ENCODE measurements at regions of chr17 and their contacts with region 1.

Region 1: GRCh38 chr17:38853292-38854219 is at the start of gene RPL23:
- DNase-seq: peak; percentile 94
- H3K4me3 Mint-ChIP-seq: peak within 1 kb of the TSS; percentile 95
- H3K27ac Mint-ChIP-seq: peak within 1 kb of the TSS; percentile 98
- H3K4me1 Mint-ChIP-seq: peaks cover 49% of the 10 kb centered on the region
- H3K27me3 Mint-ChIP-seq: no peaks in the 10 kb centered on the region
- total RNA-seq, gene RPL23: 933 to 960 TPM

Region 2: DNA sequence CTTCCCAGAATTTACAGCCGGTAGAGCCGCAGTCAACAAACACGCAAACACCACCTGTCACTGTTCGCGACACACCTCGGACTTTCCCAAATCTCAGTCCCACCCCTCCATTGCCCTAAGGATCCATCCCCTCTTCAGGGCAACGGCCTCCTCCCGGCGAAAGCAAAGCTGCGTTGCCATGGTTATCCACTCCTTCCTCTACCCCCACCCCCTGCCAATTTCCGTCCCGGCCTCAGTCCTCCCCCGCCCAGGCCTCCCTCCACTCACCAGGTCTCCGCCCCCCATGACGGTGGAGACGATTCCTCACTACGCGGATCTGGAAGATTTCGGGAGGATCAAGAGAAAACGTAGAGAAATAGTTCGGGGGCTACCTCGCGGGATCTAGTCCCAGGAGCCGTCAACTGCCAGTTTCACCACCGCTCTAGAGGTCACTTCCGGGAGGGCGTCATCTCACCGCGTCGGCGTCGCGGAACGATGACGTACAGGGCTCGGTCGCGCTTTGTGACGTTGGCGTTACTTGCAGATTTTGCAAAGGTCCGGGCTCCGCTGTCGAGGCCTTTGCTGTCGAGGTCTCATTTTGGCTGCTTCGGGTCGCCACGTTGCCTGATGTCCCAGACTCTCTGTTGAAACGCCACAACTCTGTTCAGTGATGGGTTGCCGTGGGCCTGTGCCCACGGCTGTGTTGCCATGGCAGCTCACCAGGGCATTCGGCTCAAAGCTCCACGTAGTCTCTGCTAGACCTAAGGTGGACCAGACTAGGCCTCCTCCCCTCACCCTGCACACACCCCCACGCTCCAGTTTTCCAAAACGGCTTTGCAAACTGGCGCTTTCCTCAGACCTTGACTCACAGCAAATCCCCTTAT is 28.4 kb before region 1 on chr17 and contains the start of gene CWC25:
- CTCF ChIA-PET with region 1: interaction called, 7 read pairs
- POLR2A ChIA-PET with region 1: interaction called, 85 read pairs
- DNase-seq: peak; percentile 97
- H3K4me3 Mint-ChIP-seq: peak within 1 kb of the TSS; percentile 99
- H3K27ac Mint-ChIP-seq: peak within 1 kb of the TSS; percentile 98
- H3K4me1 Mint-ChIP-seq: peaks cover 33% of the 10 kb centered on the region
- H3K27me3 Mint-ChIP-seq: no peaks in the 10 kb centered on the region
- total RNA-seq, gene CWC25: 29.0 to 30.1 TPM

Region 3: DNA sequence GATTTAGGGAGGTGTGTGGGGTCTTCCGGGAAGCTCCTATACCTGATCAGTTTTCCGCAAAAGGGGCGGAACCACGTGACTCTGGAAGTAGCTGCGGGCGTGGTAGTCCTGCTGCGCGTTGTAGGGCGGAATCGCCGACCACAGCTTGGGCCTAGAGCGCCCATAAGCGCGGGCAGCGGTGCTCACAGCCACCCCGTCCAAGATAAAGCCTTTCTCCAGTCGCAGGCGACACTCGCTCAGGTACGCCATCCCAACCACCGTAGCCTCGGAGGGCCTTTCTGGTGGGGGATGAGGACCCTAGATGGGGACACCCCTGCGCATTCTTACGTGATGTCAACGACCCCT is 12.4 kb before region 1 on chr17:
- CTCF ChIA-PET with region 1: interaction called, 3 read pairs
- POLR2A ChIA-PET with region 1: interaction called, 11 read pairs
- DNase-seq: peak; percentile 23
- H3K4me3 Mint-ChIP-seq: peak overlapping the region; percentile 58
- H3K27ac Mint-ChIP-seq: no peak overlapping the region
- H3K4me1 Mint-ChIP-seq: no peaks in the 10 kb centered on the region
- H3K27me3 Mint-ChIP-seq: no peaks in the 10 kb centered on the region

Region 4: DNA sequence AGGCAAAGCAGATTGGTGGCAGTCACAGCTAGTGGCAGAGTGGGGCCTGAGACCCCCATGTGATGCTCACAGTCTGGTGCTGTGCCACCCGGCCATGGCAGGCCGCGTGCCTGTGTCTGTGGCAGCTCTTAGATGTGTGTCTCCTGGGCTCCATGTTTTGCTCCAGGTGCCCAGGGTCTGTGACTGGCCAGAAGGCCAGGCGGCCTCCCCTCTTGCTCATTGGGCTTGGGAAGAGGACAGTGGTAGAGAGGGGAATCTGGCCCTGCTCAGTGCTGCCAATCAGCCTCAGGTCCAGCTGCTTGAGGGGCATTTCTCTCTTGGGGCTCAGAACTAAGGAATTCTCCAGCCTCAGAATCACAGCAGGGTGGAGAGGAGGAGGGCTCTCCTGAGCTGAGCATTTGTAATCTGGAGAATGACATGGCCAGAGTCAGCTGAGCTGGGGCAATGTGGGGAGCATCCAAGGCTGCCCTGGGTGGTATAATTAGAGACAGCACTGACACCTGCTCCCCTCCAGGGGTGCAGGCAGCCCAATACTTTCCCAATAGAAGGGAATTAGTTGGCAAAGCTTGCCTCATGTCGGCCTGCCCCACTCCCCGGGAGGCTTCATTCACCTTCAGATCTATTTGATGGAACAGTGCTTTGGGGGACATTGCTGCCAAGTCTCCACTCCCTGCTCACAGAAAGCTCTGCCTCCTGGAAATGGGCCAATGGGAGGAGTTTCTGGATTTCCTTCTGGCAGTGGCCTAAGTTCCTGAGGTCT is 69.2 kb after region 1 on chr17:
- CTCF ChIA-PET with region 1: no interaction called
- POLR2A ChIA-PET with region 1: interaction called, 11 read pairs
- DNase-seq: peak; percentile 15
- H3K4me3 Mint-ChIP-seq: no peak overlapping the region
- H3K27ac Mint-ChIP-seq: no peak overlapping the region
- H3K4me1 Mint-ChIP-seq: peaks cover 29% of the 10 kb centered on the region
- H3K27me3 Mint-ChIP-seq: no peaks in the 10 kb centered on the region

Region 5: DNA sequence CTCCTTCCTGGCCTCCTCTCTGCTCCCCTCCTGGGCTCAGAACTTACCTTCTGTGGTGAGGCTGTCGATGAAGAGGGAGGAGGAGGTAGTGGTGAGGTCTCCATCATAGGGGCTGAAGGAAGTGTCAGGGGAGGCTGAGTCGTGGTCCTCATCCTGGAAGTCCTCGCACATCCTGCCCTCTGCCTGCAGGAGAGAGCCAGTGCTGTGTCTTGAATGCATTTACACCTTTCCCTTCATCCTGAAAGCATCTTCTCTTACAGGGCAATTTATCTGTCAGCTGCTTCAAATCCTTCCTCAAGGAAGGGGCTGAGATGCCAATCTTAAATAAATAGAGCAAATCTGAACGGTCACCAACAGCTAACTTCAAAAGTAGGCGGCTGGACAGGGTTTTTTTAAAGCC is 224.3 kb after region 1 on chr17:
- CTCF ChIA-PET with region 1: no interaction called
- POLR2A ChIA-PET with region 1: no interaction called
- DNase-seq: no peak
- H3K4me3 Mint-ChIP-seq: no peak overlapping the region
- H3K27ac Mint-ChIP-seq: no peak overlapping the region
- H3K4me1 Mint-ChIP-seq: peaks cover 15% of the 10 kb centered on the region
- H3K27me3 Mint-ChIP-seq: no peaks in the 10 kb centered on the region

Measured in activated CD4-positive, alpha-beta memory T cell treated with anti-CD3 and anti-CD28 coated beads, Interleukin-2, amount 10 ng/mL, durations not matched to agents 7 days and 5 days (primary cell).